AG04449 (cell line): ENCODE measurements at regions of chr9 and their contacts with region 1.

Region 1: DNA sequence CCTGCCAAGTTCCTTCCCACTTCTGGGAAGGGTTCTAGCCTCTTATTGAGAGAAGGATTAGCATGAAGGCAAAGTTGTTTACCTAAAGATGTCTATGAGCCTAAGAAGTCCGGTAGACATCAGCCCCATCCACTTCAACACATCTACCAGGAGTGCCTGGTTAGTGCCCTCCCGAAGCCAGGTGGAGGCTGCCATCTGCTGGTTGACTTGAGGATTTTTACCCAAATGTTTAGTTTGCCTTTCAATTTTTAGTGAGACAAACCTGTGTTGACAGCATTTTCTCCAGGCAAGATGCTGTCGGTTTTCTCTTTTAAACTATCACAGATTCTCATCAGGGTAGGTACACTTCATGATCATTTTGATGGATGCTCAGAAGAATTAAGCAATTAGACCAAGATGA is 83.6 kb upstream of the TNFSF8 start:
- DNase-seq: no peak
- H3K4me3 ChIP-seq: no peak overlapping the region
- CTCF ChIP-seq: peak; percentile 67

Region 2: DNA sequence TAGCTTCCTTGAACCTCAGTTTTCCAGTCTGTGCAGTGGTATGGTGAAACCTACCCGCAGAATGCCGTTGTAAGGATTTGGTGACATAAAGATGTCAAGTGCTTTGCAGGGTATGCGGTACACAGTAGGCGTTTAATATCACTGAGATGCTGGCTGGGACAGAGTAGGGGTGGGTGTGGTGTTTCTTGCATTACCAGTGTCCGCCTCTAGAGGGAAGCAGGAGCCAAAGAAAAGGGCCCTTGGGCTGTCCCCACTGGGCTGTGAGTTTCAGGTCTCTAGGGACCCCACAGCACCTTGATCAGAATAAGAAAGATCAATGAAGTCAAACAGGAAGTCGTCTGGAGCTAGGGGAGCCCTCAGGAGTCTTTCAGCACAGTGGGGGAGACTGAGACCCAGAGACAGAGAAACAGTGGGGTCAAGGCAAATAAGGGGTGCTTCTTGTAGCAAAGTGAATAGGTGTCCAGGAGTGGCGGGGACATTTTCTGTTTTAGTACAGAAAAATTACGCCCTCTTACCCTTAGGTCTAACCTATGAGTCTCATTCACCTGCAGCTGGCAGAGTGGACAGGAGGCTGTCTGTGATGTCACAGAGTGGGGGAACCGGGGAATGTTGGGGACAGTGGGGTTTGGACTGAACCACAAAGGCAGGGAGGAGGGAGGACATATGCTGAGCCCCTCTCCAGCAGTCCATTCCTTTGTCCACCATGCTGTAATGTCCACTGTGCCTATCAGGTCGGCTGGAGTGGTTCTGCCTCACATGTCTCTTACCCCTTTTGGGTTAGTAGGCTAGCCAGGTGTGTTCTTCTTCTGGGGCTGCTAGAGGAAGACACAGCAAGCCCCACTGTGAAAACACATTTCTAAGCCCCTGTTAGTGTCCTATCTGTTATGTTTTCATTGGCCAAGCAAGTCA is 351.7 kb before region 1 on chr9:
- CTCF ChIA-PET with region 1: interaction called, 62 read pairs
- POLR2A ChIA-PET with region 1: no interaction called
- DNase-seq: no peak
- H3K4me3 ChIP-seq: no peak overlapping the region
- CTCF ChIP-seq: peak; percentile 76

Region 3: DNA sequence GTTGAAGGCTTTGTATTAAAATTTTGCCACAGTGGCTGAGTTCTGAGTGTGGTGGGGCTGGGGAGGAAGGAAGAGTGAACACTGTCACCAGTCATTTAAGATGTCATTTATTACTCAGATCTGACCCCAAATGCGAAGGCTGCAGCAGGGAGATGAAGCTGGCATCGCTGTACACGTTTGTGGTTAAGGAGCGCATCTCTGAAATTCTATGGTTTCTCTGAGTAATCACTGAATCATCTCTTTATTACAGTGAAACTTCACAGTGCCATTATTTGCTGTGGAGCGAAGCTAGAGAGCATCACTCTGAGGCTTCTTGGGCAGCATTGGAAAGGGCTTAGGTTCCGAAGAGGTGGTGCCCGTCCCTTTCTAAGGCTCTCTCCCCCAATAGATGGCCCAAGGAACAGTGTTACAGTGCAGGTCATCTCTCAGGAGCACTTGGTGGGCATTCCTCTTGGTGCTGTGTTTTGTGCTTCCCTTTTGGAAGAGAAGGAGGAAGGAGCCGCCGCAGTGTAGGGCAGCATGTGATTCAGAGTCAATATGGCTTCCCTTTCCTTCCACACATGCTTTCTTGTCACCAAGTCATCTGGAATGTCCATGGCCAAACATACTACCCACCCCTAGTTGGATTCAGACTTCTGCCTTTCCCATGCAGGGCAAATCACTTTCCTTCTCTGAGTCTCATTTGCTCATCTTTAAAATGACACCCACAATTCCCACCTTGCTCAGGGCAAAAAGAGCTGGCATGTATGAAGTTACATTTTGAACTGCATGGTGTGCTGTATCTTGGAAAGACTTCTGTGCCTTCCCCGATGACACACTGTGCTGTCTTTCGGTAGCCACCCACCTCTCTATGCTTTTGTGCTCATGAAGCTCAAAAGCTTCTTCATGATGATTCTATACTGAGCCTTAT is 322.7 kb before region 1 on chr9:
- CTCF ChIA-PET with region 1: interaction called, 17 read pairs
- POLR2A ChIA-PET with region 1: no interaction called
- DNase-seq: peak; percentile 52
- H3K4me3 ChIP-seq: no peak overlapping the region; the same call in 1 of the 2 replicates
- CTCF ChIP-seq: no peak

Region 4: DNA sequence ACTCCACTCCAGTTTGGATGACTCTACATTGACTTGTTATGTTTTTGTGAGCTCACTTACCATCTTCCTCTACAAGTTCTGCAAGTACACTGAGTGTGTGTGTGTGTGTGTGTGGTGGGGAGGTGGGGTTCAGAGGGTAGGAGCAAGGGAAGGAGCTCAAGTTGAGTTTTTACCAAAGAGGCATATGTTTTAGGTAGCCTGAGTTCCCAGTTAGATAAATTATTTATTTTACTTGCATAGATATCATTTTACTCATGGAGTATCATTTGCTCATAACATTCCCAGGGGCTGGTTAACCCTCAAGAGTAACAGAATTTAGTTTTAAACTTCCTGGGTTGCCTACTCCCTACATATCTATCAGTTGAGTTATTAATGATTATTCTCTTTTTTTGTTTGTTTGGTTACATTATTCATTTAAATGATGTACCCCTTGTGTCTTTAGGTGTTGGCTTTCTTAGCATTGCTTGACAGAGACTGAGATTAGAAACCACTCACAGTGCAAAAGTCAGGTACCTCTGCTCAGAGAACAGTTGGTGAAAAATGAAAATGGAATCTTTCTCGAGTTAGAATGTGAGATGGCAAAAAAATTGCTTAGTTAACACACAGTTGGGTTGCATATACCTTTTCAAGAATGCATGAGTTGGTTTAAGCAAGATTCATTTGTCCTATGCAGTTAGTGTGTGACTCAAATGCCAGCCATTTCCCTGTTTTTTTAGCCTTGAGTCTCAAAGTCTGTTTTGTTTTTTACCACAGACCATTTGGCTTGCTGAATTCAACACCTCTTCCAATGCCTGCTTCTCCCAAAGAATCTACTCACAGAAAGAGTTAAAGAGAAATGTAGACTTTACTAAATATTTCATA is 112.8 kb before region 1 on chr9:
- CTCF ChIA-PET with region 1: interaction called, 84 read pairs
- POLR2A ChIA-PET with region 1: no interaction called
- DNase-seq: peak; percentile 65
- H3K4me3 ChIP-seq: no peak overlapping the region
- CTCF ChIP-seq: no peak

Region 5: DNA sequence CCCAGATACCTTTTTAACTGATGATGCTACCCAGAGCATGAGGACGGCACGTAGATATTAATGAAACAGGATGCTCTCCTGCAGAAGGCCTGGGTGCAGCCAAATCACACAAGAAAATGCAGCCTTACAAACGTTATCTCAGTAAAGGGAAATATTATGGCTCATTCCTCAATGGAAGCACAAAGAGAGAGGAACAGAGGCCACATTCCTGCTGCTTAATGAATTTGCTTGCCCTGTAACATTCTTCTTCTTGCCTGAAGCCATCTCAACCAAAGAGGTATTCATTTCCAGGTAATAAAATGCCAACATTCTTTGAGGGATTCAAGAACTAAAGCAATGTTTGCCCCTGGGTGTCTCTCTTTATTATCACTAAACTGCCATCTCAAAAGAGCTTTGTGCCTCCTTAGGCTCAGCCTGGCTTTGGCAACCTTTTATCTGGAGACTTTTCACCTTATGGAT is 11.0 kb after region 1 on chr9:
- CTCF ChIA-PET with region 1: interaction called, 12 read pairs
- POLR2A ChIA-PET with region 1: no interaction called
- DNase-seq: no peak
- H3K4me3 ChIP-seq: no peak overlapping the region
- CTCF ChIP-seq: no peak